HEK293 (cell line): ENCODE measurements at regions of chr12 and their contacts with region 1.

Region 1: DNA sequence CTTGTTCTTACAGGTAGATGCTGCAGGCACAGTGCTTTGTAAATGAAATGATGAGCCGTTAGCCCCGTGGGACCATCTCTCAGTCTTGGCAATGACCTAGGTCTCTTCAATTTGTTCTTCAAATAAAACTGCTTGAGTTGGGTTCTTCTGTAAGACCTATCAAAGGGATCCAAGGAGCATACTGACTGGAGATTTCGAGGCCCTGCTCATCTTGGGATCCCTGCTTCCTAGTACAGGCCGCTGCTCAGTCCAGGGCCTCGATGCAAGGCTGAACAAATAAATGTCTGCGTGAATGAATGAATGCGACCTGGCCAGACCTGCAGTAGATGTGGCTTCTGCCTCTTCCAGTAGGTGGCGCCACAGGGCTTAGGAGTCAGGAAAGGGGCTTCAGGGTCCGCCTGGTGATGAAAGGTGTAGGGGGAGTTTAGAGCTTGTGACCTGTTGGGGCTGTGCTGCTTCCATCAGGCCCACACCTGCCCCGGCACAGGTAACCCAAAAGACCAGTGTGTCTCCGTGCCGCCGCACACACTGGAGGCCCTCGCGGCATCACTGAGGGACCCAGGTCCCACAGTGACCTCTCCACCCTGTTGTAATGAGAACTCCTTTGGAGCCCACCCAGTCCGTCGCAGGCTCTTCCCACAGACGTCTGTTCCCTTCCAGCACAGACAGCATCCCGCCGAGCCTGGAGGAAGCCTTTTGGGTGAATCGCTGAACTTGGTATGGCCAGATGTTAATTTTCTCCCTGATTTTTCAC is 4.4 kb downstream of the CACNA1C start:
- H3K4me3 ChIP-seq: no peak overlapping the region
- H3K27ac ChIP-seq: no peak overlapping the region
- H3K4me1 ChIP-seq: no peaks in the 10 kb centered on the region; the same call in 1 of the 2 replicates
- CTCF ChIP-seq: peak; percentile 63; the same call in 1 of the 2 replicates

Region 2: DNA sequence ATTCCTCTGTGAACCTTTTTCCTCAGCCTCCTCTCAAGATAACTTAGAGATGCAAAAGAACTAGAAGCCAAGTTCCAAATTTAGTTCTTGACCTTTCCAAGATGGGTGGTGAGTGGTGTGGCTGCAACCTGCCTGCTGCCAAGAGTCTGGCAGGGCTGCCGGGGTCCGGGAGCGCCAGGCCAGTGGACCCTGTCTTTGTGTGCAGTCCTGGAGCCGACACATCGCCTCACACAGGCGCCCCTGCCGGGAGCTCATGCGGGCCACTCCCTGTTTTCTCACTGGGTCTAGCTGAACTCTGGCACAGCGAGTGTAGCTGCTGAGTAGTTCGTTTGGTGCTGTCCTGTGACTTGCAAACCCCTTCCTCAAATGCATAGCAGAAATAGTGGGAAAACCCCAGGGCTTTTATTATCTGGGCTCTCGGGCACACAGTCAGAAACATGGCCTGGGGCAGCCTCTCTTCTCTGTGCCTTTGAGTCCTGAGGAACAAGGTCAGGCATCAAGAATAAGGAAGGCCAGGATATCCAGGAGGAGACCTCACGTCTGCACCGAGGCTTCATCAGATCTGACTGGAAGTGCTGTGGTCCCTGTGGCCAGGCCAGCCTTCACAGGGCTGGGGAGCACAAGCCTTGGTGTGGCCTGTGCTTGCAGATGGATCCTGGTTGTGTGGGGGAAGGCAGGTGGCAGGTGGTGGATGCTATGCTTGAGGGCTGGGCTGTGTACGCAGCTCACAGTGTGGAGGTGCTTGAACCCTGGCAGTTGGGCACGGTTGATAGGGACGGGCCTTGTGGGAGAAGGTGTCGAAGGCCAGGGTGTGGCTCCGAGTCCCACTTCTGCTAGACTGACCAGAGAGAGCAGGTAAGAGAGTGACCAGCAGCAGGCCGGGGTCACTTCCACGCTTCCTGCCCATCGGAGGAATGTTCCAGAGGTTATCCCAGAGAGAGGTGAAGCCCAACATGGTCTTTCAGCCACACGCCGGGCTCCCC is 80.8 kb after region 1 on chr12:
- CTCF ChIA-PET with region 1: no interaction called
- POLR2A ChIA-PET with region 1: no interaction called
- H3K4me3 ChIP-seq: no peak overlapping the region
- H3K27ac ChIP-seq: no peak overlapping the region
- H3K4me1 ChIP-seq: no peaks in the 10 kb centered on the region
- CTCF ChIP-seq: no peak

Region 3: DNA sequence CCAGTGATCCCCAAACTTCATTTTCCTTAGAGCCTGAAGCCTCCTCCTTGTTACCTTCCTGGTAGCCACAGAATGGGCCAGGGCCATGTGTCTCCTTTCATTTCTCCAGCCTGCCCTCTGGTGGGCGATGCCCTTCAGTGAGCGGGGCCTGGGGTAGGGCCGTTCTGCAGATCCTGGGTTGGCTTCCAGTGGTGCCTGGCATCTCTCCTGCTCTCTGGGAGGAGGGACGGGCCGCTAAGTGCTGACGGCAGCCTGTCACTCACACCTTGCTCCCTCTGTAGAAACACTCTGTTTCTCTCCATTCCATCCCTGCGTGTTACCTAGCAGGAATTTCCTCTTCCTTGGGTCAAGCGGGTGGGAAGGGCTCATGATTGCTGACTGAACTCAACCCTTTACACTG is 227.6 kb after region 1 on chr12:
- CTCF ChIA-PET with region 1: interaction called, 29 read pairs
- POLR2A ChIA-PET with region 1: no interaction called
- H3K4me3 ChIP-seq: no peak overlapping the region
- H3K27ac ChIP-seq: no peak overlapping the region
- H3K4me1 ChIP-seq: no peaks in the 10 kb centered on the region
- CTCF ChIP-seq: peak; percentile 72

Region 4: DNA sequence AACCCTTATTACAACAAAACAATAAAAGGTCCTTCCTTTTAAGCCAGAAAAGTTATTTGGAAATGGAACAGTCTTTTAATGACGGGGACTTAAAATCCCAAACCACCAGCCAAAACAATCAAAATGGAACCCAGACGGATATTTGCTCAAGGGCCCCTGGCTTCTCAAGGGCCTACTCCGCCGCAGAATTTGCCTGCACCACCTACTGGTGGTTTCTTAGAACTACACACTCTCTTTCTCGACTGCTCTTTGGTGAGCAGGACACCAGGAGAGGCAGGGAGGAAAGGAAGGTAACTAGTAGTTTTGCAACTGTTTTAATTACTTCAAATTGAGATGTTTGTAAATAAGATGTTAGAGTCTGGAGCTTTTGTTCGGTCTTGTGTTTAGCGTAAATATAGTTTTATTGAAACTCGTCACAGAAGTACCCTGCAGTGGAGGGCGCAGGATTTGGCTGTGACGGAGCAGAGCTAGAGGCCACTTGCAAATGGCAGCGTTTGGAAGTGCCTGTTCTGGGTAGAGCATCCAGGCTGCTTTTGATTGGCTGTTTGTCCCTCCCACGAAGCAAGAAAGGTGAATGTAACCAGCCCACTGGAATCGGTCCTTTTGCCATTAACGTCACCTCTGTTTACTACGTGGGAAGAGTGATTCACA is 234.1 kb after region 1 on chr12:
- CTCF ChIA-PET with region 1: interaction called, 29 read pairs
- POLR2A ChIA-PET with region 1: no interaction called
- H3K4me3 ChIP-seq: no peak overlapping the region
- H3K27ac ChIP-seq: no peak overlapping the region
- H3K4me1 ChIP-seq: no peaks in the 10 kb centered on the region
- CTCF ChIP-seq: 0 out of 2 replicates have a peak, but pooled peaks have one; percentile 19

Region 5: DNA sequence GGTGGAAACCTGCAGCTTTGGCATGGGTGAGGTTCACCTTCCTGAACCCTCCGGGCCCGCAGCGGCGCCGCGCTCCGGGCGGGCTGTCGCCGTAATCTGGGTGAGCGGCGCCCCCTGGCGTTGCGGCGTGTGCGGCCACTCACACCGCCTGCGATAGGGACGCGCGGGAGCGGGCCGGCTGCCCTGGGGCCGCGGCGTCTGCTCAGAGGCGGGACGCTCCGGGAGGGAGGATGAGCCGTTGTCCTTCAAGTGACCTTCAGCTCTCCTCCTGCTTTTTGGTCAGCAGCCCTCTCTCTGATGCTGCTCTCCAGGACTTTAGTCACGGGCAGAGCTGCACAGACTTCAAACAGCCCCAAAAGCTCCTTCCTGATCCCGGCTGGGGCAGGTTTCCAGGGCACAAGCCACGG is 525.9 kb after region 1 on chr12:
- CTCF ChIA-PET with region 1: interaction called, 20 read pairs
- POLR2A ChIA-PET with region 1: no interaction called
- H3K4me3 ChIP-seq: peak overlapping the region; percentile 21
- H3K27ac ChIP-seq: no peak overlapping the region
- H3K4me1 ChIP-seq: no peaks in the 10 kb centered on the region
- CTCF ChIP-seq: peak; percentile 76